CD8-positive, alpha-beta T cell (primary cell): ENCODE measurements at regions of chr1 and their contacts with region 1.

Region 1: DNA sequence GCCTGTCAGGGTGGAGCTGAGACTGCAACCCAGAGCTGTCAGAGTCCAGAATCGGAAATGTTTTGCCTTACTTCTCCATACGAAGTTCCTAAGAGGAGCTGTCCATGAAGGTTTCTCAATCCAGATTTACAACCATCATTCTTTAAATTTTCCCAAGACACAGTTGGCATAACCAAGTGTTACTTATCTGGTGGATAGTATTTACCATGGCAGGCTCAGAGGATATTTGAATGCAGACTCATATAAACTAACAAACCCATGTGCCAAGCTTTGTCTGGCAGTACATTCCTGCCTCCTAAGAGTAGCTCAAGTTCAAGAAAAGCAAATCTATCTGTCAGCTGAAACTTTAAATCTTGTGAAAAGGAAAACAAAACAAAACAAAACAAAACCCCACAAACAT is 267.9 kb downstream of the ZNF326 start:
- DNase-seq: no peak
- ATAC-seq: no peak
- H3K4me3 ChIP-seq: no peak overlapping the region
- H3K4me3 Mint-ChIP-seq: no peak overlapping the region
- H3K27ac ChIP-seq: no peak overlapping the region
- H3K27ac Mint-ChIP-seq: no peak overlapping the region
- H3K4me1 ChIP-seq: no peaks in the 10 kb centered on the region
- H3K4me1 Mint-ChIP-seq: no peaks in the 10 kb centered on the region
- H3K27me3 ChIP-seq: no peaks in the 10 kb centered on the region
- H3K27me3 Mint-ChIP-seq: peaks cover 7% of the 10 kb centered on the region
- CTCF ChIP-seq: no peak

Region 2: DNA sequence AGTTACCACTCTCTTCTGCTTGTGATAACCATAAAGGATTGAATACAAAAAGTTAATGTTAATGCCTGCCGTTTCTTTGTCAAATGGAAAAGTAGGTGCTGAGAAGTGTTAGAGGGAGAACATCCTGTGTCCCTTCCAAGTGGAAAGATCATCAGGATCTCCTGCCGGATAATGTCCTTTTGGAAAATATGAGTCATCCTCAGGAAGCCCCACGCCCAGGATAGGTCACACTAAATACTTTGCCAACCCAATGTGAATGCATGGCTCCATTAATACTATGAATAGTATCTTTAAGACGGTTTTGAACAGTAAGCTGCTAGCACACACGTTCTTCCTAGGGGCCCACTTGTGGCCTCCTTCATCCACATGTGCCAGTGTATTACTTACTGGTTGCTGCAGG is 11.6 kb after region 1 on chr1:
- CTCF ChIA-PET with region 1: no interaction called
- POLR2A ChIA-PET with region 1: no interaction called
- intact Hi-C with region 1: loop called in 1 of 2 experiments (anchors 1 kb)
- DNase-seq: no peak
- ATAC-seq: no peak
- H3K4me3 ChIP-seq: no peak overlapping the region
- H3K4me3 Mint-ChIP-seq: no peak overlapping the region
- H3K27ac ChIP-seq: no peak overlapping the region
- H3K27ac Mint-ChIP-seq: no peak overlapping the region
- H3K4me1 ChIP-seq: no peaks in the 10 kb centered on the region
- H3K4me1 Mint-ChIP-seq: no peaks in the 10 kb centered on the region
- H3K27me3 ChIP-seq: no peaks in the 10 kb centered on the region
- H3K27me3 Mint-ChIP-seq: no peaks in the 10 kb centered on the region
- CTCF ChIP-seq: no peak